Activated CD4-positive, alpha-beta memory T cell treated with anti-CD3 and anti-CD28 coated beads for 36 hours (primary cell): ENCODE measurements at regions of chr2 and their contacts with region 1.

Region 1: GRCh38 chr2:9630749-9631483 is at the start of gene YWHAQ:
- DNase-seq: peak; percentile 98
- H3K4me3 Mint-ChIP-seq: peak within 1 kb of the TSS; percentile 97
- H3K27ac Mint-ChIP-seq: peak within 1 kb of the TSS; percentile 95
- H3K4me1 Mint-ChIP-seq: peaks cover 45% of the 10 kb centered on the region
- H3K27me3 Mint-ChIP-seq: no peaks in the 10 kb centered on the region
- total RNA-seq, gene YWHAQ: 495 to 541 TPM

Region 2: GRCh38 chr2:9423100-9423921 is 207.6 kb before region 1 on chr2 and contains the starts of genes CPSF3 and ITGB1BP1:
- CTCF ChIA-PET with region 1: no interaction called
- POLR2A ChIA-PET with region 1: interaction called, 4 read pairs
- intact Hi-C with region 1: loop called (anchors 2 kb)
- DNase-seq: peak; percentile 98
- H3K4me3 Mint-ChIP-seq: peak within 1 kb of the TSS; percentile 87
- H3K27ac Mint-ChIP-seq: peak within 1 kb of the TSS; percentile 88
- H3K4me1 Mint-ChIP-seq: peaks cover 35% of the 10 kb centered on the region
- H3K27me3 Mint-ChIP-seq: no peaks in the 10 kb centered on the region
- total RNA-seq, gene CPSF3: 77.5 to 78.1 TPM
- total RNA-seq, gene ITGB1BP1: 136 to 142 TPM

Region 3: DNA sequence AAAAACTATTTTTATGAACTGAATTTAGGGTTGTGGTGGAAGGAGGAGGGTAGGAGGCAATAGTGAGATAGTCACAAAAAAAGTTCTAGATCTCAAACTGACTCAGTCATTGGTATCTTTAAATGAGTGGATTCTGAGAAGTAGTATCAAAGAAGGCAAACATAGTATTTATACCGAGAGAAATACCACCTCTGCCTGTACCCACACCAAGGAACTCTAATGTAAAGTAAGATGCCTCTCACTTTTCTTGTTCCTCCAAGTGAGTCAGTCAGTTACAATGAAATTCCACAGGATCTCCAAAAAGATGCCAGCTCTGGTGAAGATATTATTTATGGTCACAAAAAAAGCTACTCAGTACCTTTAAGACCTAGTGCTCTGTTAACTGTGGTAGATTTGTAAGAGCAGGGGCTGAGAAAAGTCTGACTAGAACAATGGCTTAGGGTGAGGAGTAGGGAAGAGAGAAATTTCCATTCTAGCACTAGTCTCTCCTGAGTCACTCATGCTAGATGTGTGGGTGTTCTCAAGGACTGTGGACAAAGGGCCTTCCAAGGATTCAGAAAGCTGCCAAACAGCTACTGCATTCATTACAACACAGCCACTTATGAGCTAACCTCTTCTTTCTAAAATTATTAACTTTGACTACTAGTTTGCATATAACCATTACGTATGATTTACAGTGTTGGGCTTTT is 36.4 kb before region 1 on chr2:
- CTCF ChIA-PET with region 1: interaction called, 5 read pairs
- POLR2A ChIA-PET with region 1: interaction called, 28 read pairs
- intact Hi-C with region 1: loop called (anchors 1 kb)
- DNase-seq: no peak
- H3K4me3 Mint-ChIP-seq: no peak overlapping the region
- H3K27ac Mint-ChIP-seq: peak overlapping the region; percentile 83
- H3K4me1 Mint-ChIP-seq: peaks cover 81% of the 10 kb centered on the region
- H3K27me3 Mint-ChIP-seq: no peaks in the 10 kb centered on the region

Region 4: GRCh38 chr2:9641641-9642040 is 10.7 kb after region 1 on chr2:
- CTCF ChIA-PET with region 1: interaction called, 4 read pairs
- POLR2A ChIA-PET with region 1: interaction called, 3 read pairs
- intact Hi-C with region 1: loop called (anchors 1 kb)
- DNase-seq: peak; percentile 76
- H3K4me3 Mint-ChIP-seq: peak overlapping the region; percentile 52
- H3K27ac Mint-ChIP-seq: peak overlapping the region; percentile 64
- H3K4me1 Mint-ChIP-seq: peaks cover 31% of the 10 kb centered on the region
- H3K27me3 Mint-ChIP-seq: no peaks in the 10 kb centered on the region

Region 5: GRCh38 chr2:9708683-9709538 is 78.0 kb after region 1 on chr2:
- CTCF ChIA-PET with region 1: interaction called, 13 read pairs
- POLR2A ChIA-PET with region 1: interaction called, 19 read pairs
- intact Hi-C with region 1: no loop called
- DNase-seq: peak; percentile 80
- H3K4me3 Mint-ChIP-seq: no peak overlapping the region
- H3K27ac Mint-ChIP-seq: peak overlapping the region; percentile 93
- H3K4me1 Mint-ChIP-seq: peaks cover 63% of the 10 kb centered on the region
- H3K27me3 Mint-ChIP-seq: no peaks in the 10 kb centered on the region

Region 6: DNA sequence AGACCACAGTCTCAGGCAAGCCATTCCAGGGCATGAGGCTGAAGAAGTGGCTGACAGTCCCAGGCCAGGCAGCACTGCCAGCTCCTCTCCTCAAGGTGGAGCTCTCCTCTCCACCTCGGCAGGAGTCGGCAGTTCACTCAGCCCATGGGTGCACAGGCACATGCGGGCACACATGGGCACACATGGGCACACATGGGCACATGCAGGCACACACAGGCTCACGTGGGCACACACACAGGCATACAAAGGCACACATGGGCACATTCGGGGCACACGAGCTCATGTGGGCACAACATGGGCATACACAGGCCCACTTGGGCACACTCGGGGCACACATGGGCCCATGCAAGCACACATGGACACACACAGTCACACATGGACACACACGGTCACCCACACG is 147.1 kb after region 1 on chr2:
- CTCF ChIA-PET with region 1: no interaction called
- POLR2A ChIA-PET with region 1: interaction called, 12 read pairs
- intact Hi-C with region 1: loop called (anchors 1 kb)
- DNase-seq: peak; percentile 55
- H3K4me3 Mint-ChIP-seq: no peak overlapping the region
- H3K27ac Mint-ChIP-seq: peak overlapping the region; percentile 38
- H3K4me1 Mint-ChIP-seq: peaks cover 47% of the 10 kb centered on the region
- H3K27me3 Mint-ChIP-seq: no peaks in the 10 kb centered on the region